Dendritic cell treated with granulocyte-macrophage colony-stimulating factor and Interleukin-4, amounts not matched to agents 40 ng/mL and 50 ng/mL, for 4 days (primary cell): ENCODE measurements at regions of chr10 and their contacts with region 1.

Region 1: GRCh38 chr10:6141296-6142151 is 52.7 kb downstream of the RBM17 start:
- H3K4me3 Mint-ChIP-seq: no peak overlapping the region
- H3K27ac Mint-ChIP-seq: peak overlapping the region; percentile 87
- H3K4me1 Mint-ChIP-seq: peaks cover 63% of the 10 kb centered on the region
- H3K27me3 Mint-ChIP-seq: peaks cover 34% of the 10 kb centered on the region

Region 2: GRCh38 chr10:5216801-5217200 is 924.7 kb before region 1 on chr10:
- intact Hi-C with region 1: no loop called
- H3K4me3 Mint-ChIP-seq: no peak overlapping the region
- H3K27ac Mint-ChIP-seq: no peak overlapping the region
- H3K4me1 Mint-ChIP-seq: no peaks in the 10 kb centered on the region
- H3K27me3 Mint-ChIP-seq: no peaks in the 10 kb centered on the region

Region 3: GRCh38 chr10:6124666-6125065 is 16.9 kb before region 1 on chr10:
- intact Hi-C with region 1: loop called (anchors 2 kb)
- H3K4me3 Mint-ChIP-seq: peak overlapping the region; percentile 55
- H3K27ac Mint-ChIP-seq: peak overlapping the region; percentile 89
- H3K4me1 Mint-ChIP-seq: peaks cover 69% of the 10 kb centered on the region
- H3K27me3 Mint-ChIP-seq: no peaks in the 10 kb centered on the region

Region 4: GRCh38 chr10:6185039-6185716 is 43.7 kb after region 1 on chr10:
- intact Hi-C with region 1: no loop called
- H3K4me3 Mint-ChIP-seq: no peak overlapping the region
- H3K27ac Mint-ChIP-seq: peak overlapping the region; percentile 11
- H3K4me1 Mint-ChIP-seq: peaks cover 43% of the 10 kb centered on the region
- H3K27me3 Mint-ChIP-seq: no peaks in the 10 kb centered on the region